Dorsolateral prefrontal cortex (tissue), 120 donors: ENCODE measurements at regions of chr1 and their contacts with region 1.

Region 1: GRCh38 chr1:200372080-200372884 is 37.6 kb downstream of the ZNF281 start:
- DNase-seq: no peak
- H3K4me3 ChIP-seq: no peak overlapping the region
- H3K27ac ChIP-seq: peak overlapping the region in 58 of 59 donors; percentile 31 to 100 (median 94)
- H3K27me3 ChIP-seq: no peaks in the 10 kb centered on the region
- CTCF ChIP-seq: no peak

Region 2: DNA sequence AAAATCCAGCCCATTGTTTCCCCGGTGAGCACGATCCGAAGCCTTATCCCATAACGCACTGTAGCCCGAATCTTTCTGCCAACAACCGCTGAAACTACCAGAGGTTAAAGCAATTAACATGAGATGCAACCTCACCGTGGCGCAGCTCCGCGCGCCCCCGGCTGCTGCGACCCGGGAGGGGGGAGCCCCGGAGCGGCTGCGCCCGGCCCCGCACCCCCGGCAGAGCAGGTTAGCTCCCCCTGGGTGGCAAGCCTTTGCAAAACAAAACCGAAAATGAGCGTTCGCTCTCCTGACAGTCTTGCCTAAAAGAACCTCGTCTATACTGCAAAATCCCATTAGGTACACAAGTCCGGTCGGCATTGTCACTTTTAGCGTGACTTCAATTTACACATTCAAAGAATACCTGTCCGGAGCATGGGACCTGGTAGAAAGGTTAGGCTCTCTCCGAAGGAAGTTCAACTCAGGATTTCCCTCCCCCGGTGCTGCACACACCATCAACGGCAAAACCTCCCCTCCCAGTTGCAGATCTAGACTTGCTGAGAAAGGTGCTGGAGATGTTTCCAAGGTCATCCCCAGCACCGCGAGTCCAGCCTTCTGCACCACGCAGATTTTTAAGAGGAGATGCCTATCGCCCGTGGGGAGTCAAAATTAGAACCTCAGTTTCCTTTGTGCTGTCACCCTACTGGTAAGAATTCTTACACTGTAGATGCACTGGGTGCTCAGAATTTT is 69.9 kb before region 1 on chr1:
- intact Hi-C with region 1: loop called (anchors 5 to 10 kb)
- DNase-seq: peak in 3 of 10 donors; percentile 25 to 61 (median 32)
- H3K4me3 ChIP-seq: peak overlapping the region; percentile 50 to 92 (median 74)
- H3K27ac ChIP-seq: peak overlapping the region; percentile 11 to 91 (median 82)
- H3K27me3 ChIP-seq: peaks cover 0 to 7% (median 0%) of the 10 kb centered on the region in 45 donors
- CTCF ChIP-seq: peak in 18 of 56 donors; percentile 4 to 40 (median 21)

Region 3: GRCh38 chr1:200401708-200402107 is 29.4 kb after region 1 on chr1:
- intact Hi-C with region 1: loop called in 1 of 2 experiments (anchors 2 kb)
- DNase-seq: no peak
- H3K4me3 ChIP-seq: peak overlapping the region in 5 of 59 donors; percentile 1 to 45 (median 18)
- H3K27ac ChIP-seq: peak overlapping the region in 52 of 59 donors; percentile 11 to 88 (median 73)
- H3K27me3 ChIP-seq: no peaks in the 10 kb centered on the region
- CTCF ChIP-seq: no peak